Activated B cell treated with CpG ODN at 0.5 μM for 24 hours (primary cell): ENCODE measurements at regions of chr6 and their contacts with region 1.

Region 1: GRCh38 chr6:158819213-158819909 is at the start of gene EZR:
- DNase-seq: peak; percentile 80
- ATAC-seq: peak; percentile 66
- H3K4me3 Mint-ChIP-seq: peak within 1 kb of the TSS; percentile 100
- H3K27ac Mint-ChIP-seq: peak within 1 kb of the TSS; percentile 95
- H3K4me1 Mint-ChIP-seq: peaks cover 51% of the 10 kb centered on the region
- H3K27me3 Mint-ChIP-seq: no peaks in the 10 kb centered on the region
- CTCF ChIP-seq: no peak
- total RNA-seq, gene EZR: 488 and 489 TPM in 2 replicates

Region 2: DNA sequence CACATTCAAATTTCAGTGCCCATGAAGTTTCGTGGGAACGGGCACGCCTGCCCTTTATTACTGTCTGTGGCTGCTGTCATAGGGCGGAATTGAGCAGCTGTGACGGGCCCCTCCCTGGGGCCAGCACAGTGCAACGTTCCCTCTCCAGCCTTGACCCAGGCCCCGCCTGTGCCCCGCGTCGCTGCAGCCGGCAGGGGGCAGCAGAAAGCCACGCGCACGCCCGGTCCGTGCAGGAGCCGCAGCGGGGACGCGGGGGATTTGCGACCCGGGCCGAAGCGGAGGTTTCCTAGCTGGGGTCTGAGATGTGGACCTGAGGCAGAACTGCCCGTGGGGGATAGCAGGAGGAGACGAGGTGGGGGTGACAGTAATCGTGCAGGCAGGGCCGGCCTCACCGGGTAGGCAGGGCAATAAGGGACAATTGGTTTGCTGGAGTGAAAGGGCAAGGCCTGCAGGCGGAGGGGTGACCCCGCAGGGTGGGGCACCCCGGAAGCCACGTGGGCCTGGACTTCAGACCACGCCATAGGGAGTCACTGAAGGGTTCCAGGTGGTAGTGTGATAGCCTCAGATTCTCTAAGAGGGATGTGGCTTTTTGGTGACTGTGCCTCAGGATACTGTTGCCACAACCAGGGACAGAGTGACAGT is 115.1 kb before region 1 on chr6:
- CTCF ChIA-PET with region 1: interaction called, 4 read pairs
- POLR2A ChIA-PET with region 1: interaction called, 9 read pairs
- intact Hi-C with region 1: loop called (anchors 1 kb)
- DNase-seq: peak; percentile 89
- ATAC-seq: peak; percentile 95
- H3K4me3 Mint-ChIP-seq: peak overlapping the region; percentile 86
- H3K27ac Mint-ChIP-seq: peak overlapping the region; percentile 81
- H3K4me1 Mint-ChIP-seq: peaks cover 29% of the 10 kb centered on the region
- H3K27me3 Mint-ChIP-seq: no peaks in the 10 kb centered on the region
- CTCF ChIP-seq: peak; percentile 92

Region 3: GRCh38 chr6:158803733-158804143 is 15.6 kb before region 1 on chr6:
- CTCF ChIA-PET with region 1: interaction called, 5 read pairs
- POLR2A ChIA-PET with region 1: interaction called, 139 read pairs
- intact Hi-C with region 1: loop called (anchors 2 kb)
- DNase-seq: no peak
- ATAC-seq: peak; percentile 65
- H3K4me3 Mint-ChIP-seq: peak overlapping the region; percentile 78
- H3K27ac Mint-ChIP-seq: peak overlapping the region; percentile 82
- H3K4me1 Mint-ChIP-seq: peaks cover 95% of the 10 kb centered on the region
- H3K27me3 Mint-ChIP-seq: no peaks in the 10 kb centered on the region
- CTCF ChIP-seq: no peak

Region 4: DNA sequence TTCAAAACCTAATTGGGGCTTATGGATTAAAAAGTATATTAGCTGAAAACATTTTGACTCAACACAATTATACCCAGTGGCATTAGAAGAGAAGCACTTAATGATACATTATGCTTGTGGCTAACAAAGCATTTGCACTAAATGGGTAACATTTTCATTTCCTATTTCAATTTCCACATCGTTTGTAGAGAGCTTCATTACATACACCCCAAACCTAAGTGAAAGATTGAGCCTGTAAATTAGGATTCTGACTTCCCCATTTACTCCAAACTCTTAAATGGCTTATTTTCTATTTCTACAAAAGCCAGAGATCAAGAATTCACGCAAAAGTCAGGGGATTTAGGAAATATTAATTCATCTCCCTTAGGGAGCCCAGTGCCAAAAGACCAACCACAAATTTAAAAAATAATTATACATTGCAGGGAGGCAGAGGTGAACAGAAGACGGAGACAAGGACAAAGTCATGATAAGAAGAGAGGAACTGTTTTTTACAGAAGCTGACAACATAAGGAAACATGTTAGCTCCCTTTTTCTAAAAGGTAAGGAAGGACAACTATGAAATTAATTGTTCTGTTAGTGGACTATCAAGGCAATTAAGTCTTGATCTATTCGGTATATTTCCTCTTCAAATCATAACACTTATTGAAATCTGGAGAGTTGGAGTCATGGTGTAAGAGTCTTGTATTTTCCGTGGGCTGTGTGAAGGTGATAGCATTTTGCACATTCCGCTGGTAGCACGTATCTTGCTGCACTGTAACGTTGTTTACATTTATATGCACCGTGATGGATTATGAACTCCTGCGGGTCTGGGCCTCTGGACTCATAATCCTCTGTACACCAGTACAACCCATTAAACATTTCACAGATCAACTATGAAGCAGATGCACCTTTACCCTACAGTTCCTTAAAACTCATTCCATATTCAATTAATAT is 24.7 kb after region 1 on chr6:
- CTCF ChIA-PET with region 1: no interaction called
- POLR2A ChIA-PET with region 1: interaction called, 15 read pairs
- intact Hi-C with region 1: no loop called
- DNase-seq: no peak
- ATAC-seq: peak; percentile 79
- H3K4me3 Mint-ChIP-seq: peak overlapping the region; percentile 28
- H3K27ac Mint-ChIP-seq: peak overlapping the region; percentile 76
- H3K4me1 Mint-ChIP-seq: peaks cover 35% of the 10 kb centered on the region
- H3K27me3 Mint-ChIP-seq: no peaks in the 10 kb centered on the region
- CTCF ChIP-seq: no peak

Region 5: DNA sequence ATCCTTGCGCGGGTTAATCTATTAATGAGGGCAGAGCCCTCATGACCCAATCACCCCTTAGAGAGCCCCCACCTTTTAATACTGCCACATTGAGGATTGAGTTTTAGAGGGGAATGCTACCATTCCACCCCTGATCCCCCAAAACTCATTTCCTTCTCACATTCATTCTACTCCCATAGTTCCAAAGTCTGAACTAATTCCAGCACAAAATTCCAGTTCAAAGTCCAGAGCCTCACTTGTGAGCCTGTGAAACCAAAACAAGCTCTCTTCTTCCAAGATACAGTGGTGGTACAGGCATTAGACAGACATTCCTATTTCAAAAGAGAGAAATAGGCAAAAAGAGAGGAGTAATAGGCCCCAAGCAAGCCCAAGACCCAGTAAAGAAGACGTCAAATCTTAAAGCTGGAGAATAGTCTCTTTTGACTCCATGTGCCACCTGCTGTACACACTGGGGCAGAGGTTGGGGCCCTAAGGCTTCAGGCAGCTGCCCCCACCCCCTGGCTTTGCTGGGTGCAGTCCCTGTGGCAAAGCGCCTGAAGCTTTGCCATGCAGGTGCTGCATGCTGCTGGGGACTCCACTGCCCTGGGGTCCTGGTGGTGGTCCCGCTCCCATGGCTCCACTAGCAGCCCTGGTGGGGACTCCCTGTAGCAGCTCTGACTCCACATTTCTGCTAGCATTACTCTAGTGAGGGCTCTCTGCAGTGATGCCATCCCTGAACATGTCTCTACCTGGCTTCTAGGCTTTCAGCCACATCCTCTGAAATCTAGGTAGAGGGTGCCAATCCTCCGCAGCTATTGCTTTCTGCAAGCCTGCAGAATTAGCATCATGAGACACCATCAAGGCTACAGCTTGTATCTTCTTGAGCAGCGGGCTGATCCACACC is 139.4 kb after region 1 on chr6:
- CTCF ChIA-PET with region 1: interaction called, 6 read pairs
- POLR2A ChIA-PET with region 1: interaction called, 14 read pairs
- intact Hi-C with region 1: loop called (anchors 1 kb)
- DNase-seq: peak; percentile 20
- ATAC-seq: peak; percentile 87
- H3K4me3 Mint-ChIP-seq: no peak overlapping the region
- H3K27ac Mint-ChIP-seq: no peak overlapping the region
- H3K4me1 Mint-ChIP-seq: peaks cover 34% of the 10 kb centered on the region
- H3K27me3 Mint-ChIP-seq: no peaks in the 10 kb centered on the region
- CTCF ChIP-seq: no peak

Region 6: DNA sequence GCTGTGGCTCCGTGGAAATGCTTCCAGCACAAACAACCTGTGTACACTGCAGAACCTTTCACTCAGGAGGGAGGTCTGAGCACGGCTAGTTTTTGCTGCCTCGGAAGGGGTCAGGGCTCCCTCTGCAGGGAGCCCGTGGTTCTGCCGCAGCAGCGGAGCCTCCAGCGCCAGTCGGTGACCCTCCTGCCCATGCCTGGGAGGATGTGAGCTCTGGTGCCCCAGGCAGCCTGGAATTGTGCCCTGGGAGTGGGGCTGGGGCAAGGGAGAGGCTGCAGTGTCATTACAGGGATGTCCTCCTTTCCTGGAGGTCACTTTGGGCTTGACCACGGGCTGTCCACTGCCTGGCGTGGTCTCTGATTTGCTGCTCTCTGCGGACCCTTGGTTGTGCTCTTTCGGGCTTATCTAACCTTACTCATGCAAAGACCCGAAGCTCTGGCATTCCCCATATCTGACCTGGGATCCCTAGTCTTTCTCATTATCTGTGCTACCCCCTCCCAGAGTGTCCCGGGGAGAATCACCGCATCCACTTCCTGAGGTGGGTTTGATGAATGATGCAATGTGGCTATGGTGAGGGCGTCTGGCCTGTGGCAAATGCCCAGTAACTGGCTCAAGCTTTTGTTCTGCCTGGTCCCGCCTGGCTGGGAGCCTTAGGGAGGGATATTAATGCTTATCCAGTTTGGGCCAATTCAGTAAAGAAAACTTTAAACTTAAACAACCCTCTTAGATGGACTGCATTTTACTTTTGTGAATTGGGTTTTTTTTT is 285.0 kb after region 1 on chr6:
- CTCF ChIA-PET with region 1: no interaction called
- POLR2A ChIA-PET with region 1: no interaction called
- intact Hi-C with region 1: loop called (anchors 5 kb)
- DNase-seq: peak; percentile 76
- ATAC-seq: peak; percentile 50
- H3K4me3 Mint-ChIP-seq: peak overlapping the region; percentile 67
- H3K27ac Mint-ChIP-seq: peak overlapping the region; percentile 98
- H3K4me1 Mint-ChIP-seq: peaks cover 91% of the 10 kb centered on the region
- H3K27me3 Mint-ChIP-seq: no peaks in the 10 kb centered on the region
- CTCF ChIP-seq: no peak